ENCODE measurements at regions of chr14 and their contacts with region 1.

Region 1: GRCh38 chr14:79552778-79553177 is 658.5 kb downstream of the DIO2 start:
- DNase-seq: no peak
- H3K4me3 ChIP-seq: no peak overlapping the region
- CTCF ChIP-seq: no peak

Region 2: GRCh38 chr14:78997811-78998210 is 555.0 kb before region 1 on chr14:
- in situ Hi-C with region 1: loop called (anchors 25 kb)
- DNase-seq: peak; percentile 68
- H3K4me3 ChIP-seq: no peak overlapping the region
- CTCF ChIP-seq: no peak